AG04450 (cell line): ENCODE measurements at regions of chr1 and their contacts with region 1.

Region 1: DNA sequence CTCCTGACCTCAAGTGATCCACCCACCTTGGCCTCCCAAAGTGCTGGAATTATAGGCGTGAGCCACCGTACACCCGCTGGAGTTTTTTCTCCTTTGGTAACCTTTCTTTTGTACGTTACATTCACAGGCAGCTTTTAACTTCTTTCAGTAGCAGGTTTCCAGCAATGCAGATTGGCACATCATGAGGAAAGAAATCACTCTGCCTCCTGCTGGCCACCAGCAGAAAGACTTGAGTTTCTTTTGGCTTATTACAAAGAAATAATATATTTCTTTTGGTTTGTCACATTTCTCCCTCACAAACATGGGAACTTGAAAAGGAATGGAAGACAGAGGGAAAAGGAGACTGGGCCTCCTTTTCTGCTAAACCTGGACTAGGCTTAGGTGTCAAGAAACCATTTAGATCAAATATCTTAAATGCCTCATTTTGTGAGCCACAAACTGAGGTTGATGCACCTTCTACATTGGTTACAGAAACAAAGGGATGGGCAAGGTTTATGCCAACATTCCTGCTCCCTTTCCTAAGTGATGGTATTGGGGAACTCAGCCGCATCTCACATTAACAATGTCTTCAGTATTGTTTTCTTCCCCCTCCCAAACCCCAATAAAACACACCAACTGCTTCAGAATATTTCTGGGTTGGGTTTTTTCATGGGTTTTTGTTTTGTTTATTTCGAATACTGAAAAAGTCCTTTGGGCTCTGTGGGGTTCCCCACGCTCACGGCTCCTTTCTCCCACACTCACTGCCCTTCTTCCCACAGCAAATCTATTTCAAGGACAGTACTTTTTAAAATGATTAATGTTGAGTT is 7.7 kb downstream of the ENSA start:
- DNase-seq: no peak
- H3K4me3 ChIP-seq: no peak overlapping the region
- H3K27ac ChIP-seq: no peak overlapping the region
- H3K27me3 ChIP-seq: no peaks in the 10 kb centered on the region
- CTCF ChIP-seq: peak; percentile 75

Region 2: GRCh38 chr1:149997585-149998262 is 624.0 kb before region 1 on chr1:
- CTCF ChIA-PET with region 1: no interaction called
- POLR2A ChIA-PET with region 1: no interaction called
- DNase-seq: no peak
- H3K4me3 ChIP-seq: no peak overlapping the region
- H3K27ac ChIP-seq: no peak overlapping the region
- H3K27me3 ChIP-seq: no peaks in the 10 kb centered on the region
- CTCF ChIP-seq: no peak

Region 3: GRCh38 chr1:150567717-150568593 is 53.7 kb before region 1 on chr1:
- CTCF ChIA-PET with region 1: interaction called, 104 read pairs
- POLR2A ChIA-PET with region 1: interaction called, 4 read pairs
- DNase-seq: peak; percentile 95
- H3K4me3 ChIP-seq: peak overlapping the region; percentile 48
- H3K27ac ChIP-seq: peak overlapping the region; percentile 97
- H3K27me3 ChIP-seq: no peaks in the 10 kb centered on the region
- CTCF ChIP-seq: no peak

Region 4: GRCh38 chr1:150720703-150721102 is 99.0 kb after region 1 on chr1 and contains the start of gene HORMAD1:
- CTCF ChIA-PET with region 1: interaction called, 11 read pairs
- POLR2A ChIA-PET with region 1: no interaction called
- DNase-seq: no peak
- H3K4me3 ChIP-seq: no peak within 1 kb of the TSS
- H3K27ac ChIP-seq: no peak within 1 kb of the TSS
- H3K27me3 ChIP-seq: no peaks in the 10 kb centered on the region
- CTCF ChIP-seq: no peak
- polyA plus RNA-seq, gene HORMAD1: not detected in 2 replicates

Region 5: GRCh38 chr1:150813058-150813707 is 191.5 kb after region 1 on chr1:
- CTCF ChIA-PET with region 1: interaction called, 21 read pairs
- POLR2A ChIA-PET with region 1: no interaction called
- DNase-seq: peak; percentile 57
- H3K4me3 ChIP-seq: no peak overlapping the region
- H3K27ac ChIP-seq: no peak overlapping the region
- H3K27me3 ChIP-seq: no peaks in the 10 kb centered on the region
- CTCF ChIP-seq: peak; percentile 93